Activated T-helper 1 cell treated with anti-CD3 and anti-CD28 coated beads, Interleukin-12 subunit alpha, Interleukin-12 subunit beta, Interleukin-2, Interleukin-4 antibody, amounts not matched to agents 30 ng/mL and 10 ng/mL and 1 ng/mL, durations not matched to agents 14 hours and 24 hours and 36 hours (primary cell): ENCODE measurements at regions of chr18 and their contacts with region 1.

Region 1: DNA sequence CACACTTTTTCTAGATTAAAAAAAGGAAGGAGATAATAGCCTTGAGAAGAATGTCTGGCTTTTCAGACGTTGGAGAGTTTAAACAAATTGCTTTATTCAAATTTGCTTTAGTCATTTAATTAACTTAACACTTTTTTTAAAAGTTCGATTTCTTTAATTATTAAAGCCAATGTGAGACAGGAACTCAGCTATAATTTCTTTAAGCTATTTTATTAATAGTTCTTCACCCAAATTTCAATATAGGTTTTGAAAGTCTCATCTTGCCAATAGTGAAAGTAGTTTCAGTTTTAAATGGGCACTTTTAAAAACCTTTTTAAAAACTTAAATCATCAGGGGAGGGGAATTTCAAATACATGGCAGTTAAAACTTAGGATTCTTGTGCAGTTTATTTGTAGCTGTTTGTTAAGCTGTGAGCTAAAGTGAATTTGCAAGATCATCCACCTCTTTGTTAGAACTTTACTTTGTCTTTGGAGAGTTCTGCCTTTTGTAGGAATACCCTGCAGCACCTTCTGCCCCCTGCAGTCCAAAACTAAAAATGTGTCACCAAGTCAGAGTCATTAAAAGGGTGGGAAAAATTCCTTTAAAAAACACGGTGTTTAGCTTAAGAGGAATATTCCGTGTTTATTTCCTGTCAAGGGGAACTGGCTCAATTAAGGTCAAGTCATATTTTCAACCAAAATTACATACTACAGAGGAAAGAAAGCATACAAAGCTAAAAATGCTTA is 4.6 kb downstream of the TGIF1 start:
- DNase-seq: no peak
- H3K4me3 Mint-ChIP-seq: peak overlapping the region; percentile 90
- H3K27ac Mint-ChIP-seq: peak overlapping the region; percentile 99
- H3K4me1 Mint-ChIP-seq: peaks cover 71% of the 10 kb centered on the region
- H3K27me3 Mint-ChIP-seq: peaks cover 2% of the 10 kb centered on the region

Region 2: GRCh38 chr18:3261371-3262246 is 192.9 kb before region 1 on chr18 and contains the start of gene MYL12B:
- intact Hi-C with region 1: loop called (anchors 1 kb)
- DNase-seq: peak; percentile 75
- H3K4me3 Mint-ChIP-seq: peak within 1 kb of the TSS; percentile 93
- H3K27ac Mint-ChIP-seq: peak within 1 kb of the TSS; percentile 98
- H3K4me1 Mint-ChIP-seq: peaks cover 82% of the 10 kb centered on the region
- H3K27me3 Mint-ChIP-seq: no peaks in the 10 kb centered on the region
- total RNA-seq, gene MYL12B: 234 and 235 TPM in 2 replicates

Region 3: DNA sequence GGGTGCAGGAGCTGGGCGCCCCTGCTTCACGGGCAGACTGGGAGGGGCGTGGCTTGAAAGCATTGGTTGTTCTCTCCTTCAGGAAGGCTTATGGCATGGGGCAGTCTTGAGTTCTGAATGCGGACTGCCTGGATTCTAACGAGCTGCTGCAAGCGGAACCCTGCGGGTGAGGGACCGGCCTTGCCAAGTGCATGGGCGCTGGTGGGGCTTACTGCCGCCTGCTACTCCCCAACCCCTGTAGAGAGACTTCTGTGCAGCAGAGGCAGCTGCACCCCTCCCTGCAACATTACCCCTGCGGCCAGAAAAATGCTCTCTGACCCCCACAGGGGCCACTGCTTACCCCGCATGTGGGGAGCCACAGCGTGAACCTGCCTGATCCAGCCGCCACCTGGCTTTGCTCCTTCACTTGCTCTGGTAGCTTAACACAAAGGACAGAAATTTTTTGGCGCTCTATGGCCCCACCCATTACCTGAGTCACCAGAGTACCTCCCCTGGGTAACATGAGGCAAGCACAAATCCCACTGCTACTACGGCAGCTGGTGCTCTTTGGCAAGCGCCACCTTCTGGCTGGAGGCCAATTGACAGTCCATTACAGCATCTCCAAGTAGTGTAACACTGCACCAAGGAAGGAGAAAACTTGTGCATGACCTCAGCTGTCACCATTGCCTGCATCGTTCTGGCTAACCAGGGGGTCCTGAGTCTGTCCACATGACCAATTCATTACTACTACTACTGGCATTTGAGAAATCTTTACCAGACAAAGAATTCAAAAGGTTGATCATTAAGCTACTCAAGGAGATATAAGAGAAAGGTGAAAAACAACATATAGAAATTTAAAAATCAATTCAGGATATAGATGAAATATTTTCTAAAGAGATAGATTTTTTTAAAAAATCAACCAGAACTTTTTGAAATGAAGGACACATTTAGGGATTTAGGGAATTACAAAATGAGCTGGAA is 157.2 kb before region 1 on chr18:
- intact Hi-C with region 1: loop called (anchors 1 kb)
- DNase-seq: peak; percentile 89
- H3K4me3 Mint-ChIP-seq: peak overlapping the region; percentile 91
- H3K27ac Mint-ChIP-seq: peak overlapping the region; percentile 82
- H3K4me1 Mint-ChIP-seq: peaks cover 15% of the 10 kb centered on the region
- H3K27me3 Mint-ChIP-seq: peaks cover 33% of the 10 kb centered on the region

Region 4: GRCh38 chr18:3472681-3473544 is 18.4 kb after region 1 on chr18:
- intact Hi-C with region 1: loop called (anchors 2 kb)
- DNase-seq: no peak
- H3K4me3 Mint-ChIP-seq: no peak overlapping the region
- H3K27ac Mint-ChIP-seq: no peak overlapping the region
- H3K4me1 Mint-ChIP-seq: peaks cover 12% of the 10 kb centered on the region
- H3K27me3 Mint-ChIP-seq: no peaks in the 10 kb centered on the region

Region 5: GRCh38 chr18:3585656-3586509 is 131.4 kb after region 1 on chr18:
- intact Hi-C with region 1: loop called (anchors 1 kb)
- DNase-seq: peak; percentile 54
- H3K4me3 Mint-ChIP-seq: no peak overlapping the region
- H3K27ac Mint-ChIP-seq: peak overlapping the region; percentile 69
- H3K4me1 Mint-ChIP-seq: peaks cover 46% of the 10 kb centered on the region
- H3K27me3 Mint-ChIP-seq: peaks cover 3% of the 10 kb centered on the region